Stomach (tissue), 19 donors: ENCODE measurements at regions of chr3 and their contacts with region 1.

Region 1: GRCh38 chr3:195909644-195910508 is 1.5 kb upstream of the TNK2 start:
- DNase-seq: peak; percentile 92 to 96
- H3K4me3 ChIP-seq: peak overlapping the region; percentile 72 to 95 (median 80)
- H3K27ac ChIP-seq: peak overlapping the region; percentile 54 to 85 (median 75)
- H3K4me1 ChIP-seq: peaks cover 43 to 60% (median 47%) of the 10 kb centered on the region in 4 donors
- H3K27me3 ChIP-seq: no peaks in the 10 kb centered on the region
- CTCF ChIP-seq: no peak
- EP300 ChIP-seq: no peak
- POLR2A ChIP-seq: no peak

Region 2: GRCh38 chr3:195868866-195869412 is 40.9 kb before region 1 on chr3:
- intact Hi-C with region 1: loop called (anchors 5 kb)
- DNase-seq: no peak
- H3K4me3 ChIP-seq: no peak overlapping the region
- H3K27ac ChIP-seq: peak overlapping the region in 1 of 5 donors; percentile 5
- H3K4me1 ChIP-seq: peaks cover under 1 to 16% (median 1%) of the 10 kb centered on the region in 4 donors
- H3K27me3 ChIP-seq: no peaks in the 10 kb centered on the region
- CTCF ChIP-seq: no peak
- EP300 ChIP-seq: no peak
- POLR2A ChIP-seq: no peak